ENCODE measurements at regions of chr2 and their contacts with region 1.

Region 1: GRCh38 chr2:227106845-227107759 is 56.9 kb downstream of the COL4A4 start:
- H3K4me3 Mint-ChIP-seq: no peak overlapping the region
- H3K27ac Mint-ChIP-seq: no peak overlapping the region
- H3K4me1 Mint-ChIP-seq: no peaks in the 10 kb centered on the region
- H3K27me3 Mint-ChIP-seq: no peaks in the 10 kb centered on the region

Region 2: DNA sequence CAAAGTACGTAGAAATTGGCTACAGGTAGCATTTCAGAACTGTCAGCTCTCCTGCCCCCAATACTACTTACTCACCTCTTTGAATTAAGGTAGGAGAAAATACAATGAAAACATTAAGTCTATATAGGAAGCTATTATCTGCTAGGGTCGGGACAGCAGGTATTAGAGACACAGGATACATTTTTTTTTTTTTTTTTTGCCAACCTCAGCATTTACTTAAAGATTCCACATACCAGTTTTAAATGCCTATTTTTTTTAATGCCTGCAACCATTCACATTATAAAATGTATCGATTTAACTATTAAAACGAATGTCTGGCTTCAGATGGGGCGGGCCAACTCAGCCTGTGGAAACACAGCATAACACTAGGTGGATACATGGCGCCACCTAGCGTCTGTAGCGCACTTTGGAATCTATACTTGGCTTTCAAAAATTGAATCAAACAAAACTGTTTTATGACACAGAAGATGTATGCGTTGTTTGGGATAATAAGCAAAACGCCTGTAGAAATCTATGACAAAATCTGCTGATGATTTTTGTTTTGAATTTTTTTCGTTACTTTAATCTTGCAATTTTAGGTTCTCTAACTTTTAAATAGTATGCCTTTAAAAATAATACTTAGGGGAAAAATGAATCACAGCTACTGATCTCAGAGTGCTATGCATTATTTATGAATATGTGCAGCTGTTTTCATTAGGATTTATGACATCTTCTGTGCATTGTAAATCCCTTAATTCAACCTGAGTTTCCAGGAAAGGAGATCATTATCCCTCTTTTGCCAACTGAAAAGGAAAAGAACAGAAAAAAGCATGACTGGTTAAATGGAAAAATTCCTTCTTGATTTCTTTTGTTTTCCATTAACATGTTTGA is 1446.6 kb before region 1 on chr2:
- intact Hi-C with region 1: loop called (anchors 2 kb)
- H3K4me3 Mint-ChIP-seq: no peak overlapping the region
- H3K27ac Mint-ChIP-seq: no peak overlapping the region
- H3K4me1 Mint-ChIP-seq: peaks cover 4% of the 10 kb centered on the region
- H3K27me3 Mint-ChIP-seq: peaks cover 5% of the 10 kb centered on the region

Region 3: DNA sequence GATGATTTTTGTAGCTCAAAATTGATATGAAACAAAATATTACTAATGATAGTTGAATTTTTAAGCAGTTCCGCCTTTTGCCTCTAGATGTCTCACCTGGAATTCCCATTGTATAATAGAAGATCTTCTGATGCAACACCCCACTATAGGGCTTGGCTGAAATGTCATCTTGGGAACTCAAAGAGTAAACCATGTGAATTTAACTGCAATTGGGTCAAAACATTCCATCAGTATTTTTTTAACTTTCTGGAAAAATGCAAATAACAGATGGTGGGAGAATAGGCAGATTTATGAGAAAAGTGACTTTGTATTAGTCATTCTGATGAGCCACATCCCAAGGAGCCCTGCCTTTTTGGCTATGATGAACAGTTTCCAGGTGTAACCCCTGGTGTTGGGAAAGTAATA is 1217.7 kb before region 1 on chr2:
- intact Hi-C with region 1: loop called (anchors 5 kb)
- H3K4me3 Mint-ChIP-seq: no peak overlapping the region
- H3K27ac Mint-ChIP-seq: no peak overlapping the region
- H3K4me1 Mint-ChIP-seq: no peaks in the 10 kb centered on the region
- H3K27me3 Mint-ChIP-seq: peaks cover 7% of the 10 kb centered on the region

Region 4: GRCh38 chr2:226215902-226216503 is 891.1 kb before region 1 on chr2:
- intact Hi-C with region 1: loop called (anchors 5 kb)
- H3K4me3 Mint-ChIP-seq: no peak overlapping the region
- H3K27ac Mint-ChIP-seq: no peak overlapping the region
- H3K4me1 Mint-ChIP-seq: no peaks in the 10 kb centered on the region
- H3K27me3 Mint-ChIP-seq: no peaks in the 10 kb centered on the region

Region 5: DNA sequence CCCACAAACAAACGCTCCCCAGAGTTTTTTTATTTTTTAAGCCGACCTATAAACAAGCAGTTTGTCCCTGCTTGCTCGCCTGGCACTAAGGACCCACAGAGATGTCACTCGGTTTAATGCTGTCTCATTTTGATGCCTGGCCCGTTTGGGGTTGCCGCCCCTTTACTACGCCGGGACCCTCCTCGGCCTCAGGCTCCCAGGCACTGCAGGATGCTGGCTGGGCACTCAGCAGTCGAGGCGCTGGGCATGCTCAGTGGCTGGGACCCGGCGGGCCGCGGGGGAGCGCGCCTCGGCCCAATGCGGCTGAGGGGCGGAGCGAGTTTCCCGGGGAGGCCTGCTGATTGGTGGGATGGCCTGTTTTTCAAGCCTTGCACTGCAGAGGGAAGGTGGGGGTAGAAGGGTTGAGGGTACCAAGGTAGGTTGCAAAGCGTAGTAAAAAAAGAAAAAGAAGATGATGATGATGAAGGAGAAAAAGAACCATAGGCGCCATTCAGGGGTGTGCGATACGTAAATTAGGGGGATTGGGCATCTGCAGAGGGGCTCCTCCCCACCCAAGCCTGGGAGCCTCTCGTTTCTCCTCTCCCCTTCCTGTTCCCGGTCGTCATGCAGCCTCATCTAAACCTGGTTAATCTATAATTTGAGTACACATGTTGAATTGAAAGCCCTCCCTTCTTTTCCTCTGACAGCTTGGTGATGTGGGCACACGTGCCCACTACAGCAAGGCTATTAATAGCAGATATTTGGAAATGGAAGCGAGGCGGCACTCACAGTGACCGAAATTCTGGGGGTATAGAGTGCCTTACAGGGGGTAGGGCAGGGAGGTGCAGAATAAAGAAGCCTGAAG is 305.9 kb before region 1 on chr2:
- intact Hi-C with region 1: loop called (anchors 5 kb)
- H3K4me3 Mint-ChIP-seq: peak overlapping the region; percentile 47
- H3K27ac Mint-ChIP-seq: no peak overlapping the region
- H3K4me1 Mint-ChIP-seq: peaks cover 32% of the 10 kb centered on the region
- H3K27me3 Mint-ChIP-seq: peaks cover 71% of the 10 kb centered on the region

Region 6: GRCh38 chr2:226994798-226995197 is 112.3 kb before region 1 on chr2:
- intact Hi-C with region 1: loop called (anchors 5 kb)
- H3K4me3 Mint-ChIP-seq: no peak overlapping the region
- H3K27ac Mint-ChIP-seq: no peak overlapping the region
- H3K4me1 Mint-ChIP-seq: peaks cover 28% of the 10 kb centered on the region
- H3K27me3 Mint-ChIP-seq: no peaks in the 10 kb centered on the region